Activated CD4-positive, alpha-beta memory T cell treated with anti-CD3 and anti-CD28 coated beads for 36 hours (primary cell): ENCODE measurements at regions of chr16 and their contacts with region 1.

Region 1: GRCh38 chr16:4802659-4803287 is 340 bp upstream of the ROGDI start:
- DNase-seq: peak; percentile 90
- H3K4me3 Mint-ChIP-seq: peak overlapping the region; percentile 75
- H3K27ac Mint-ChIP-seq: no peak overlapping the region
- H3K4me1 Mint-ChIP-seq: peaks cover 9% of the 10 kb centered on the region
- H3K27me3 Mint-ChIP-seq: no peaks in the 10 kb centered on the region

Region 2: GRCh38 chr16:4475880-4476788 is 326.6 kb before region 1 on chr16 and contains the start of gene HMOX2:
- CTCF ChIA-PET with region 1: no interaction called
- POLR2A ChIA-PET with region 1: no interaction called
- intact Hi-C with region 1: no loop called
- DNase-seq: peak; percentile 97
- H3K4me3 Mint-ChIP-seq: peak within 1 kb of the TSS; percentile 89
- H3K27ac Mint-ChIP-seq: peak within 1 kb of the TSS; percentile 87
- H3K4me1 Mint-ChIP-seq: peaks cover 38% of the 10 kb centered on the region
- H3K27me3 Mint-ChIP-seq: no peaks in the 10 kb centered on the region
- total RNA-seq, gene HMOX2: 69.1 to 76.0 TPM

Region 3: DNA sequence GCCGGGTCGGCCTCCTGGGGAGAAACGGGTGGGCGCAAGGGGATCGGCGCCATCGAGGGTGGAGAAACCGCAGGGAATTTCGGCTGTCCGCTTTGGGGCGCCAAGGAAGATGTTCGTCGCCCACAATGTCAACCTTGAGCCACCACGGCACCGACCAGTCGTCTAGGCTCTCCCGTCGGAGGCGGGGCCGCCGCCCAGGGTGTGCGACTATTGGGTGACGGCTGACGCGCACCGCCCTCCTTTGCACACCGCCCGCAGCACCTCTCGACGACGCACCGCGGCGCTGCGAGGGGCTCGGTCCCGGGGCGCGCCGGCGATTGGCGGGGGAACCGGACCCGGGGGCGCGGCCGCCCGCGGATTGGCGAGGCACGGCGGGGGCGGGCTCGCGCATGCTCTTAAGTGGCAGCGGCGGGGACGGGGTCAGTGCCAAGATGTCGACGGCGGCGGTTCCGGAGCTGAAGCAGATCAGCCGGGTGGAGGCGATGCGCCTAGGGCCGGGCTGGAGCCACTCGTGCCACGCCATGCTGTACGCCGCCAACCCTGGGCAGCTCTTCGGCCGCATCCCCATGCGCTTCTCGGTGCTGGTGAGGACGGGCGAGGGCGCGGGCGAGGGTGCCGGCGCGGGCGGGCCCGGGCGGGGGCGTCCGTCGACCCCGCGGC is 109.3 kb before region 1 on chr16 and contains the start of gene NUDT16L1:
- CTCF ChIA-PET with region 1: no interaction called
- POLR2A ChIA-PET with region 1: no interaction called
- intact Hi-C with region 1: loop called (anchors 1 kb)
- DNase-seq: peak; percentile 98
- H3K4me3 Mint-ChIP-seq: peak within 1 kb of the TSS; percentile 79
- H3K27ac Mint-ChIP-seq: peak within 1 kb of the TSS; percentile 69
- H3K4me1 Mint-ChIP-seq: peaks cover 13% of the 10 kb centered on the region
- H3K27me3 Mint-ChIP-seq: no peaks in the 10 kb centered on the region
- total RNA-seq, gene NUDT16L1: 22.2 to 23.6 TPM

Region 4: GRCh38 chr16:4734063-4734729 is 68.6 kb before region 1 on chr16 and contains the starts of genes ANKS3 and DNAAF8:
- CTCF ChIA-PET with region 1: interaction called, 4 read pairs
- POLR2A ChIA-PET with region 1: interaction called, 5 read pairs
- intact Hi-C with region 1: loop called (anchors 2 kb)
- DNase-seq: peak; percentile 86
- H3K4me3 Mint-ChIP-seq: peak within 1 kb of the TSS; percentile 86
- H3K27ac Mint-ChIP-seq: peak within 1 kb of the TSS; percentile 69
- H3K4me1 Mint-ChIP-seq: peaks cover 17% of the 10 kb centered on the region
- H3K27me3 Mint-ChIP-seq: no peaks in the 10 kb centered on the region
- total RNA-seq, gene ANKS3: 11.7 to 13.3 TPM
- total RNA-seq, gene DNAAF8: 0.31 TPM in 1 of 2 experiments, not detected in the other

Region 5: GRCh38 chr16:4846891-4847773 is 44.4 kb after region 1 on chr16 and contains the starts of genes GLYR1 and UBN1:
- CTCF ChIA-PET with region 1: no interaction called
- POLR2A ChIA-PET with region 1: no interaction called
- intact Hi-C with region 1: loop called (anchors 1 kb)
- DNase-seq: peak; percentile 100
- H3K4me3 Mint-ChIP-seq: peak within 1 kb of the TSS; percentile 90
- H3K27ac Mint-ChIP-seq: peak within 1 kb of the TSS; percentile 79
- H3K4me1 Mint-ChIP-seq: peaks cover 52% of the 10 kb centered on the region
- H3K27me3 Mint-ChIP-seq: no peaks in the 10 kb centered on the region
- total RNA-seq, gene GLYR1: 71.6 to 73.3 TPM
- total RNA-seq, gene UBN1: 24.4 TPM

Region 6: GRCh38 chr16:4957720-4958509 is 155.1 kb after region 1 on chr16 and contains the start of gene SEC14L5:
- CTCF ChIA-PET with region 1: interaction called, 5 read pairs
- POLR2A ChIA-PET with region 1: no interaction called
- intact Hi-C with region 1: loop called (anchors 1 kb)
- DNase-seq: peak; percentile 97
- H3K4me3 Mint-ChIP-seq: peak within 1 kb of the TSS; percentile 66
- H3K27ac Mint-ChIP-seq: no peak within 1 kb of the TSS
- H3K4me1 Mint-ChIP-seq: peaks cover 15% of the 10 kb centered on the region
- H3K27me3 Mint-ChIP-seq: peaks cover 28% of the 10 kb centered on the region
- total RNA-seq, gene SEC14L5: 0.07 TPM in 1 of 2 experiments, not detected in the other